Endothelial cell of umbilical vein (primary cell): ENCODE measurements at regions of chr11 and their contacts with region 1.

Region 1: GRCh38 chr11:29937526-29937925 is 79.3 kb downstream of the KCNA4 start:
- DNase-seq: no peak
- H3K4me3 ChIP-seq: no peak overlapping the region
- H3K27ac ChIP-seq: no peak overlapping the region
- H3K4me1 ChIP-seq: no peaks in the 10 kb centered on the region
- H3K27me3 ChIP-seq: no peaks in the 10 kb centered on the region
- CTCF ChIP-seq: no peak
- POLR2A ChIP-seq: no peak

Region 2: DNA sequence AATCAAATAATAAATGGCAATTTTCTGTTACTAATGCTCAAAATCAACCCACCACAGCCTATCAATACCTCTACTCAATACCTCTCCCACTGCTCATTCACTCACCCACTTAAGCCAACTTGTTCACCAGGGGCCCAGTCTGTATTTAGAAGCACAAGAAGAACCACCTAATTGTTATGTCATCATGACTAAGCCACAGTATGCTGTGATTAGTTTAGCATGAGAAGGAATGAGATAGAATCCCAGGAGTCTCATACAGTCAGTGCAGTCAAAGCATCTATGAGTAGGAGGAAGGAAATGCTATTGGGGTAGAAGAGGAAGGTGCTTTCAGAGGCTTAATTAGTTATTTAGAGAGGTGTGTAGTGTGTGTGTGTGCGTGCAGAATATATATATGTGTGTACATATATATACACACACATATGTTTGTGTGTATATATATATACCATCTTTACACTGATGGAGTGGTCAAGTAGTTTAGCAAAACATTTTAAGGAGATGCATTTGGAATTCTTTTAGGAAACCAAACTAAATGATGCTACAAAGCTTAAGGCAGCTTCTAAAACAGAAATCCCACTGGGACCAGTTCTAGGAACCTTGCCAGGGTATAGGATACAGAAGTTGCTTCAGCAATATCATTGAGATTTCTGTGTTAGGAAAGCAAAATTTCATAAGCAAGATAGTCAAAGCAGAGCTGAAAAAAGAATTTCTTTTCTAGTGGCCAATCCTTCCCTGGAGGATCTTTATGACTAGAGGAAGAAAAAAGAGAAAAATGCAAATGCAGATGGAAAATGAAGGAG is 51.8 kb after region 1 on chr11:
- CTCF ChIA-PET with region 1: no interaction called
- POLR2A ChIA-PET with region 1: no interaction called
- dilution Hi-C with region 1: no loop called
- intact Hi-C with region 1: loop called (anchors 1 kb)
- DNase-seq: no peak
- H3K4me3 ChIP-seq: no peak overlapping the region
- H3K27ac ChIP-seq: no peak overlapping the region
- H3K4me1 ChIP-seq: no peaks in the 10 kb centered on the region
- H3K27me3 ChIP-seq: no peaks in the 10 kb centered on the region
- CTCF ChIP-seq: no peak
- POLR2A ChIP-seq: no peak